ENCODE measurements at regions of chr3 and their contacts with region 1.

Region 1: DNA sequence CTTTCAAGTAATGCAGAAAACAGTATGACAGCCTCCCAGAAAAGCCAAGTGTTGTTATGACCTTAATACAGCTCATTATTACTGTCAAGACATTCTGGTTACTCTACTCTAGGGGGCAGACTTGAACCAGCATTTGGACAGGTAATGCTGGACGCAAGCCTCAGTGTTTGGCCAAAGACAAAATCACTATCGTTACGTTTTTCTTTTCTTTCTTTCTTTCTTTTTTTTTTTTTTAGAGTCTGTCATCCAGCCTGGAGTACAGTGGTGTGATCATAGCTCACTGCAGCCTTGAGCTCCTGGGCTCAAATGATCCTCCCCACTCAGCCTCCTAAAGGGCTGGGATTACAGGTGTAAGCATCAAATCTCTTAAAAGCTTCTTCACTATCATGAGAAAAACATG is 29.4 kb upstream of the TMEM45A start:
- DNase-seq: peak; percentile 62
- H3K4me3 ChIP-seq: no peak overlapping the region
- H3K27ac ChIP-seq: no peak overlapping the region
- H3K4me1 ChIP-seq: no peaks in the 10 kb centered on the region
- H3K27me3 ChIP-seq: no peaks in the 10 kb centered on the region
- CTCF ChIP-seq: peak; percentile 69 to 82

Region 2: GRCh38 chr3:100400780-100401673 is 62.0 kb before region 1 on chr3 and contains the starts of genes LNP1 and TOMM70:
- CTCF ChIA-PET with region 1: interaction called, 11 read pairs
- dilution Hi-C with region 1: no loop called
- in situ Hi-C with region 1: no loop called
- intact Hi-C with region 1: no loop called
- DNase-seq: peak; percentile 96
- H3K4me3 ChIP-seq: peak within 1 kb of the TSS; percentile 52 to 95 (median 90)
- H3K27ac ChIP-seq: peak within 1 kb of the TSS; percentile 78
- H3K4me1 ChIP-seq: peaks cover 19% of the 10 kb centered on the region
- H3K27me3 ChIP-seq: no peaks in the 10 kb centered on the region
- CTCF ChIP-seq: no peak
- total RNA-seq, gene LNP1: 1.5 to 1.7 TPM
- total RNA-seq, gene TOMM70: 43.5 to 43.7 TPM

Region 3: GRCh38 chr3:100533176-100533575 is 70.2 kb after region 1 on chr3:
- CTCF ChIA-PET with region 1: interaction called, 11 read pairs
- dilution Hi-C with region 1: no loop called
- in situ Hi-C with region 1: no loop called
- intact Hi-C with region 1: no loop called
- DNase-seq: no peak
- H3K4me3 ChIP-seq: no peak overlapping the region
- H3K27ac ChIP-seq: no peak overlapping the region
- H3K4me1 ChIP-seq: peaks cover 36% of the 10 kb centered on the region
- H3K27me3 ChIP-seq: no peaks in the 10 kb centered on the region
- CTCF ChIP-seq: no peak

Region 4: GRCh38 chr3:100603469-100603868 is 140.5 kb after region 1 on chr3:
- CTCF ChIA-PET with region 1: interaction called, 11 read pairs
- dilution Hi-C with region 1: no loop called
- in situ Hi-C with region 1: no loop called
- intact Hi-C with region 1: no loop called
- DNase-seq: peak; percentile 73
- H3K4me3 ChIP-seq: no peak overlapping the region
- H3K27ac ChIP-seq: peak overlapping the region; percentile 91
- H3K4me1 ChIP-seq: peaks cover 43% of the 10 kb centered on the region
- H3K27me3 ChIP-seq: no peaks in the 10 kb centered on the region
- CTCF ChIP-seq: peak; percentile 71 to 77

Region 5: GRCh38 chr3:100627491-100627890 is 164.5 kb after region 1 on chr3:
- CTCF ChIA-PET with region 1: no interaction called
- dilution Hi-C with region 1: no loop called
- in situ Hi-C with region 1: no loop called
- intact Hi-C with region 1: no loop called
- DNase-seq: no peak
- H3K4me3 ChIP-seq: no peak overlapping the region
- H3K27ac ChIP-seq: no peak overlapping the region
- H3K4me1 ChIP-seq: peaks cover 20% of the 10 kb centered on the region
- H3K27me3 ChIP-seq: no peaks in the 10 kb centered on the region
- CTCF ChIP-seq: no peak

Region 6: DNA sequence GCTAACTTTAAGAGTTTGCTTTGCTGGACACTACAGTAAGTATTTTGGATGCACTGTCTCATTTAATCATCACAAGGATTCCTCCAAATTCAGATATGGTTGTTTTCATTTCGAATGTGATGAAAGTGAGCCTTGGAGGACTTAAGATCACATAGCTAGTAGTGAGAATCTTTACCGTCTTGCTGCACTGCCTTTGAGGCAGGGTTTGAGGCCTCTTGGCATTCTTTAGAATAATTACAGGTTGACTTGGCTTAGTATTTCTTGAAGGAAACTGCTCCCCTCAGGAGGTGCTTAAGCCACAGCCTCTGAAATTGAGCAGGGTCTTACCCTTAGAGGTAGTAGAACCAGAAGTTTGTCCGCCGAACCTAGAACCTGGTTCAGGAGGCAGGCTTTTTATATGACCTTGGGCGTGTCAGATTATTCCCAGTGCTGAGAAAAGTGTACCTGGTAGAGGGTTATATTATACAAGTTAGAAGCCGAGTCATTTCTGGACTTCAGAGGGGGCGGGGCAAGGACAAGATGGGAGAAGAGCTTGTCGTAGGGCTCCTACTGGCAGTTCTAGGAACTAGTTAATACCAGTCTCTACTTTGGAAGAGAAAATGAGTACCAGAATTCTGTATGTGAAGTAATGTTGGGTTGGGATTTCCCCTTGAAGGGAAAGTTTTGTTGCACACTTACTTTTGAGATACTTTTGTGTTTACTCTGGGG is 247.4 kb after region 1 on chr3:
- CTCF ChIA-PET with region 1: interaction called, 4 read pairs
- dilution Hi-C with region 1: no loop called
- in situ Hi-C with region 1: no loop called
- intact Hi-C with region 1: loop called (anchors 1 kb)
- DNase-seq: peak; percentile 75
- H3K4me3 ChIP-seq: peak overlapping the region; percentile 83 to 98 (median 93)
- H3K27ac ChIP-seq: peak overlapping the region; percentile 89
- H3K4me1 ChIP-seq: peaks cover 31% of the 10 kb centered on the region
- H3K27me3 ChIP-seq: no peaks in the 10 kb centered on the region
- CTCF ChIP-seq: peak; percentile 30 to 58

Region 7: DNA sequence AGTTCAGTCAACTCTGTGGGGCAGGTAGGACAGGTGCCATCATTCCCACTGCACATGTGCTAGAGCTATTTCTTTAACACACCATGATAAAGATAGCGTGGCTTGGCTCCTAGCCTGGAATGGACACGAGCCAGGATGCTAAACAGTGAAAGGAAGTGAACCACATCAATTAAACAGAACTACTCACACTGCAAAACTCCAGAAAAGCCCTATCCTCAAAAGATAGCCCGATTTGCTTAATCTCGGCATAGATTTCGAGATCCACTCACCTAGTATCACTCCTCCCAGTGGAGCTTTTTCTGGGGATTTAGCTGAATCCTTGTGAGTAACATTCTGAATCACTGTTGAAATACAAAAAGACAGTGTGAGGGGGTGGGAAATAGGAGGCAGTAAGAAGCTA is 412.2 kb after region 1 on chr3:
- CTCF ChIA-PET with region 1: interaction called, 12 read pairs
- dilution Hi-C with region 1: no loop called
- in situ Hi-C with region 1: no loop called
- intact Hi-C with region 1: no loop called
- DNase-seq: peak; percentile 74
- H3K4me3 ChIP-seq: no peak overlapping the region
- H3K27ac ChIP-seq: no peak overlapping the region
- H3K4me1 ChIP-seq: no peaks in the 10 kb centered on the region
- H3K27me3 ChIP-seq: no peaks in the 10 kb centered on the region
- CTCF ChIP-seq: no peak